H1 (cell line): ENCODE measurements at regions of chr19 and their contacts with region 1.

Region 1: GRCh38 chr19:40305403-40305802 is 20.3 kb upstream of the AKT2 start:
- DNase-seq: peak in 1 of 2 experiments; percentile 66
- H3K4me3 ChIP-seq: no peak overlapping the region
- H3K27ac ChIP-seq: no peak overlapping the region
- H3K4me1 ChIP-seq: no peaks in the 10 kb centered on the region; a peak in 1 of 7 replicates
- H3K27me3 ChIP-seq: no peaks in the 10 kb centered on the region
- CTCF ChIP-seq: peak; percentile 52 to 79 (median 67)
- EP300 ChIP-seq: no peak
- POLR2A ChIP-seq: no peak
- RAD21 ChIP-seq: peak; percentile 88 to 90

Region 2: GRCh38 chr19:40231544-40232424 is 73.6 kb before region 1 on chr19:
- CTCF ChIA-PET with region 1: interaction called, 10 read pairs
- POLR2A ChIA-PET with region 1: no interaction called
- DNase-seq: no peak
- H3K4me3 ChIP-seq: no peak overlapping the region
- H3K27ac ChIP-seq: peak overlapping the region; percentile 52; the same call in 1 of the 2 replicates
- H3K4me1 ChIP-seq: peaks cover 0 to 20% (median 13%) of the 10 kb centered on the region in 4 experiments; a peak in 6 of 7 replicates
- H3K27me3 ChIP-seq: peaks cover 0 to 13% (median 4%) of the 10 kb centered on the region in 4 experiments; a peak in 4 of 7 replicates
- CTCF ChIP-seq: no peak
- EP300 ChIP-seq: no peak
- POLR2A ChIP-seq: peak in 1 of 2 experiments; percentile 44; a peak in 1 of 3 replicates
- RAD21 ChIP-seq: no peak

Region 3: GRCh38 chr19:40266119-40266518 is 39.3 kb before region 1 on chr19:
- CTCF ChIA-PET with region 1: no interaction called
- POLR2A ChIA-PET with region 1: no interaction called
- DNase-seq: no peak
- H3K4me3 ChIP-seq: no peak overlapping the region
- H3K27ac ChIP-seq: no peak overlapping the region
- H3K4me1 ChIP-seq: peaks cover 0 to 7% (median 1%) of the 10 kb centered on the region in 4 experiments; a peak in 3 of 7 replicates
- H3K27me3 ChIP-seq: no peaks in the 10 kb centered on the region
- CTCF ChIP-seq: no peak
- EP300 ChIP-seq: no peak
- POLR2A ChIP-seq: no peak
- RAD21 ChIP-seq: no peak

Region 4: GRCh38 chr19:40315812-40316475 is 10.5 kb after region 1 on chr19:
- CTCF ChIA-PET with region 1: interaction called, 14 read pairs
- POLR2A ChIA-PET with region 1: interaction called, 6 read pairs
- DNase-seq: no peak
- H3K4me3 ChIP-seq: no peak overlapping the region
- H3K27ac ChIP-seq: no peak overlapping the region; the same call in 1 of the 2 replicates
- H3K4me1 ChIP-seq: no peaks in the 10 kb centered on the region
- H3K27me3 ChIP-seq: no peaks in the 10 kb centered on the region
- CTCF ChIP-seq: no peak
- EP300 ChIP-seq: no peak
- POLR2A ChIP-seq: no peak
- RAD21 ChIP-seq: no peak

Region 5: GRCh38 chr19:40326201-40326600 is 20.8 kb after region 1 on chr19:
- CTCF ChIA-PET with region 1: interaction called, 11 read pairs
- POLR2A ChIA-PET with region 1: interaction called, 3 read pairs
- DNase-seq: no peak
- H3K4me3 ChIP-seq: no peak overlapping the region
- H3K27ac ChIP-seq: no peak overlapping the region
- H3K4me1 ChIP-seq: 0 out of 7 replicates have a peak, but pooled peaks cover 0 to 3% (median 0%) of the 10 kb centered on the region in 4 experiments
- H3K27me3 ChIP-seq: no peaks in the 10 kb centered on the region; a peak in 1 of 7 replicates
- CTCF ChIP-seq: no peak
- EP300 ChIP-seq: no peak
- POLR2A ChIP-seq: no peak
- RAD21 ChIP-seq: no peak

Region 6: DNA sequence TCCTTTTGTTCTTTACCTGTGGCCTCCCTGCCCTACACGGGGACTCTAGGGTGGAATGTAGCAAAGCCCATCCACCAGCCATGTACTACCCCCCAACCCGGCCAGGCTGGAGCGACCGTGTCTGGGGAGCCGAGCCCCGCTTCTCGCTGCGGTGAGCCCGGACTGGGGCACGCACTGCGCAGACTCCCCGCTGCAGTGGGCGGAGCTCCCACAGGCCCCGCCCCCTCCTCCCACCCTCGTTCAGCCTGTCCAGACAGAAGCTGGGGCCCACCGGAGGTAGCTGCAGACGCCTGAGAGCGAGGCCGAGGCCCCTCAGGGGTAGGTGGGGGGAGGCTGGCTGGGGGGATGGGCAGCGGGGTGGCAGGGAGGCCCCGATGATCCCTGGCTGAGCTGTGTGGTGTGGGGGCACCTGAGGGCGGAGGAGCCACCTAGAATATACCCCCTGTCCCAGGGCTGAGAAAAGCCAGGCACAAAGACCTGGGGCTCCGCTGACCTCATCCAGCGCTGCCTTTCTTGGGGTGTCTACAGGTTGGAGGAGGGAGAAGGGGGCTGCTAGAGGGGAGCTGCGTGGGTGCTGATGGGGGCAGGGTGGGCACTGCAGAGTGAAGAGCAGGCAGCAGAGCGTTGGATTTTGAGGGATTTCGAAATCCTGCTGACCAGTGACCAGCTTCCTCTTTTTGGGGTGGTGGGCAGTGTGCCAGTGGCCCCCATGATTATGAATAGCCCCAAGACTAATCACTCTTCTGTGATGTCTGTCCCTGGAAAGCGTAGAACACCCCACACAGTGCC is 60.4 kb after region 1 on chr19:
- CTCF ChIA-PET with region 1: interaction called, 11 read pairs
- POLR2A ChIA-PET with region 1: no interaction called
- DNase-seq: peak; percentile 70 to 86
- H3K4me3 ChIP-seq: peak overlapping the region; percentile 58 to 76 (median 60)
- H3K27ac ChIP-seq: 0 out of 2 replicates have a peak overlapping the region, but pooled peaks have one; percentile 5
- H3K4me1 ChIP-seq: peaks cover 0 to 16% (median 10%) of the 10 kb centered on the region in 4 experiments; a peak in 6 of 7 replicates
- H3K27me3 ChIP-seq: no peaks in the 10 kb centered on the region
- CTCF ChIP-seq: no peak
- EP300 ChIP-seq: no peak
- POLR2A ChIP-seq: no peak; a peak in 1 of 3 replicates
- RAD21 ChIP-seq: no peak